ENCODE measurements at regions of chr12 and their contacts with region 1.

Region 1: DNA sequence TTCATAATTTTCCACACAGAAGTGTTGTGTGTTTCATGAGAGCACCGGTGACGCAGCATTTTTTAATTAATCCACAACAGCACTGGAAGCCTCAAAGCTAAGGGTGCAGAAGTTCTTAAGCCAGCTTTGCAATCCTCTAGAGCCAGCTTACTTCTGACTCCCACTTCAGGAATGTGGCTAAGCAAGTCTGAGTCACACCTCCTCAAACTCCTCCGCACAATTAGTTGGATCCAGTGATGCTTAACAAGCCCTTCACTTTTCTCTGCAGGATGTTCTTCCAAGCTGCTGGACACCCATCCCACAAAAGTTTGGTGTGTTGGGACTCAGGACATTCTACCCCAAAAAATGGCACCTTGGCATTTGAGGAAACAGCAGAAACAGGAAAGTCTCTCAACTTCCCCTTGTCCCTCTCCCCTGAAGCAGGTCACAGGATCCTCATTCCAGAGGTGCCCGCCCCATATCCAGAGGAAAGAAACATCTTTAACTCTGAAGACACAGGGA is 210.0 kb downstream of the PPM1H start:
- DNase-seq: peak in 1 of 2 donors; percentile 93
- H3K4me3 ChIP-seq: no peak overlapping the region
- H3K27ac ChIP-seq: no peak overlapping the region
- H3K4me1 ChIP-seq: peaks cover 19% of the 10 kb centered on the region
- H3K27me3 ChIP-seq: no peaks in the 10 kb centered on the region
- CTCF ChIP-seq: no peak
- POLR2A ChIP-seq: no peak

Region 2: DNA sequence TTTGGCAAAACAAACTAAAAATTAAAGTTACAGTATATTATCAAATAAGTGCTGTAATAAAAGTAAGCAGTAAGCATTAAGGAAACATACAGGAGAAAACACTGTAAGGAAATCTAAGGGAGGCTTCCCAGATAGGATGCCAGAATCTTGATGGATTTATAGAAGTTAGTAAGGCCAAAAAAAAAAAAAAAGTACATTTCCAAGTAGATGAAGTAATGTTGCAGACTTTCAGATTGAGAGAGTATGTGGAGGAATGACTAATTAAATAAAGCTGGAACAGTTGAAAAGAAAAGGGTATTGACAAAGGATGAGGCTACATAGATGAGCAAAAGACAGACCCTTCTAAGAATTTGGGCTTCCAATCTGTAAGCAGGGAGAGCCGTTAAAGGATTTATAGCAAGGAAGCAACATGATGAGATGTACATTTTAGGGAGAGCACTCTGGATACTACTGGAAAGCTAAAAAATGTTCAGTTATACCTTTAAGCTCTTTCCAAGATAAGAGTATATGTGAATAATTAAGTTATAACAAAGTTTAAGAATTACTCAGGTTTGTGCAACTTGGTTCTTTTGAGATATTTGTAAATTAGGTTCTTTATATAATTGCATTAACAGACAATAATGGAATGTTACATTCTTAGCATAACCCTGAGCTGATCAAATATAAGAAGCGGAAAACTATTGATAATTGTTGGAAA is 345.8 kb before region 1 on chr12:
- intact Hi-C with region 1: no loop called
- DNase-seq: no peak
- H3K4me3 ChIP-seq: no peak overlapping the region
- H3K27ac ChIP-seq: no peak overlapping the region
- H3K4me1 ChIP-seq: peaks cover 14% of the 10 kb centered on the region
- H3K27me3 ChIP-seq: no peaks in the 10 kb centered on the region
- CTCF ChIP-seq: no peak
- POLR2A ChIP-seq: no peak

Region 3: DNA sequence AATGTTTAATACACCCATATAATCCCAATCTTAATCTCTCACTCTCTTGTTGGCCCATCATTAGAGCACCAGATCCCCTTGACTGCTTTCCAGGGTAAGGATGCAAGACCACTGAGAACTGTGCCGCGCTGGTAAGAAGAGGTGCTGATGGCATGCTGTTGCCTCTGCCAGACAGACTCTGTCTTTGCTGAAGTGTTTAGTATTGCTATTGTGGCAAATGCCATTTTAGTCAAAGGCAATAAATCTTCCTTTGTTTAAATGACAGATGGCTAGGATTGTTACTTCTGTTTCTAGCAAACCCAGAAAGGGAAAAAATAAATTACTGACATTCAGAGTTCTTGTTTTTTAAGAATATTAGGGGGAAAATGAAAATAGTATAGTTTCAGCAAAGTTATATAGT is 106.1 kb before region 1 on chr12:
- intact Hi-C with region 1: no loop called
- DNase-seq: no peak
- H3K4me3 ChIP-seq: no peak overlapping the region
- H3K27ac ChIP-seq: no peak overlapping the region
- H3K4me1 ChIP-seq: no peaks in the 10 kb centered on the region
- H3K27me3 ChIP-seq: no peaks in the 10 kb centered on the region
- CTCF ChIP-seq: no peak
- POLR2A ChIP-seq: no peak

Region 4: DNA sequence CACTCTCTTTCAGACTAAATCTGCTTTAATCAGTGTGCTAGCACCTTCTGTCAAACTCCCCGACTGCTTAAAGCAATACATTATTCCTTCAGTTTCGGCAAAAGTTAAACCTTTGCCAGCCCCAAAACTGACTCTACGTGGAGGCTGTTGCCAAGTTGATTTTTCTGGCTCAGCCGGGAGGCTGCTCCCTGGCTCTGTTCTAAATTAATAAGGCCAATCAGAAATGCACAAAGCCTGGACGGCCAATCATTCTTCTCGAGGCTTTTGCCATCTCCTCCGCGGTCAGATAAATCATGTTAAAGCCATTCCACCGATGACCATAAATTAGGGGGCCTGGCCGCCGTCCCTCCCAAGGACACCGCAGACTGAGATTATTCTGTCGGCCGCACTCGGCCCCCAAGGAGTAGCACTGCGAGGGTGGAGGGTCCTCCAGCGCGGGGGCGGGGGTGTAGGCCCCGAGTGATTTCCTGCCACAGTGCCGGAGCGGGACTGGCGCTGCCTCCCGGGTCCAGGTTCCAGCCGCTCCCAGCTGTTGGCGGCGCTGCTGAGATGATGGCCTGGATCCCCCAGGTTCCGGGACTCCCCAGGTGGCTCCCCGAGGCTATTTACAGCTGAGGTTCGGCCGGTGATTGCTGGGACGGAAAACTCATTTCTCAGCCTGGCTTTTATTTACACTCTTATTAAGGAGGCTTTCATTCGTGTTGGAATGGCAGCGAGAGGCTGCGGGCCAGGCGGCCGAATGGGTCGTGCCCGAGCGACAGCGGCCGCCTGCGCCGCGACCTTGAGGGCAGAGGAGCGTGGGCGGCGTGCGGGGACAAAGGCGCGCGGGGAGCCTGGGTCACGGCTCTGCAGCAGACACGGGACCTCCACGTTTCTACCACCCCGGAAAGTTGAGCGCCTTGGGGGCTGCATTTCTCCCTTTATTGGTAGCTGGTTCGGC is 93.3 kb before region 1 on chr12:
- intact Hi-C with region 1: loop called (anchors 10 kb)
- DNase-seq: no peak
- H3K4me3 ChIP-seq: peak overlapping the region; percentile 56 to 84
- H3K27ac ChIP-seq: peak overlapping the region; percentile 67
- H3K4me1 ChIP-seq: peaks cover 6% of the 10 kb centered on the region
- H3K27me3 ChIP-seq: no peaks in the 10 kb centered on the region
- CTCF ChIP-seq: peak in 1 of 3 experiments; percentile 41
- POLR2A ChIP-seq: no peak

Measured in vagina (tissue), 2 donors.